Sigmoid colon (tissue), 7 donors: ENCODE measurements at regions of chr5 and their contacts with region 1.

Region 1: DNA sequence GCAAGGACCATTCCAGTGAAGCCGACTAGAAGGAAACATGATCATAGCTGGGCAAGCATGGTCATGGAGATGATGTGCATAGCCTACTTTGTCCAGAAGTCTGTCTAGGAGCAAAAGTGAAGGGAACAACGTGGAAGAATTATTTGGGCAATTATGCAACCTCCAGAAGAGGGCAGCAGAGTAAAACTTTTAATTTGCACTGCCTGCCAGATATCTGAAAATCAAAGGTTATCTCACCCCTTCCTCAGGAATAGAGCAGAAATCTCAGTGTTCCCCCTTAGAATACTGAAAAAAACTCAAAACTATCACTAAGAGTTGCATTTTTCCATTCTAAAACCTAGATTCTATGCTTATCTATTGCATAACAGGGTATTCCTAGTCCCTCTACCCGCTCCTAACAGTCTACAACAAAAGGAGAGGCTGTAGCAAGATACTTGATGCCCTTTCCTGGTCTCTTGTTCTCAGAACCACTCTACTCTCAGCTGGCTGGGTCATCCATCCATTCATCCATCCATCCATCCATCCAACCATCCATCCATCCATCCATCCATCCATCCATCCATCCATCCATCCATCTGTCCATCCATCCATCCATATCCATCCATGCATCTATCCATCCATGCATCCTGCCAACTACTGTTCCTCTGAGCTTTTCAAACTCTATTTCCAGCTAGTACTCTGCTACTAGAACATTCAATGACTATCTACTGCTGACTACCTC is 8.4 kb upstream of the SETD9 start:
- DNase-seq: no peak
- H3K4me3 ChIP-seq: no peak overlapping the region
- H3K27ac ChIP-seq: no peak overlapping the region
- H3K4me1 ChIP-seq: no peaks in the 10 kb centered on the region
- H3K27me3 ChIP-seq: no peaks in the 10 kb centered on the region
- CTCF ChIP-seq: peak; percentile 54 to 64 (median 60)
- EP300 ChIP-seq: no peak
- POLR2A ChIP-seq: no peak

Region 2: GRCh38 chr5:57137401-57137800 is 236.4 kb after region 1 on chr5:
- intact Hi-C with region 1: loop called (anchors 5 kb)
- DNase-seq: no peak
- H3K4me3 ChIP-seq: no peak overlapping the region
- H3K27ac ChIP-seq: no peak overlapping the region
- H3K4me1 ChIP-seq: no peaks in the 10 kb centered on the region
- H3K27me3 ChIP-seq: no peaks in the 10 kb centered on the region
- CTCF ChIP-seq: no peak
- EP300 ChIP-seq: no peak
- POLR2A ChIP-seq: no peak

Region 3: GRCh38 chr5:57383093-57383861 is 482.3 kb after region 1 on chr5:
- intact Hi-C with region 1: no loop called
- DNase-seq: no peak
- H3K4me3 ChIP-seq: no peak overlapping the region
- H3K27ac ChIP-seq: no peak overlapping the region
- H3K4me1 ChIP-seq: peaks cover 0 to 5% (median 0%) of the 10 kb centered on the region in 4 donors
- H3K27me3 ChIP-seq: no peaks in the 10 kb centered on the region
- CTCF ChIP-seq: no peak
- EP300 ChIP-seq: no peak
- POLR2A ChIP-seq: no peak